WTC11 (cell line): ENCODE measurements at regions of chr1 and their contacts with region 1.

Region 1: DNA sequence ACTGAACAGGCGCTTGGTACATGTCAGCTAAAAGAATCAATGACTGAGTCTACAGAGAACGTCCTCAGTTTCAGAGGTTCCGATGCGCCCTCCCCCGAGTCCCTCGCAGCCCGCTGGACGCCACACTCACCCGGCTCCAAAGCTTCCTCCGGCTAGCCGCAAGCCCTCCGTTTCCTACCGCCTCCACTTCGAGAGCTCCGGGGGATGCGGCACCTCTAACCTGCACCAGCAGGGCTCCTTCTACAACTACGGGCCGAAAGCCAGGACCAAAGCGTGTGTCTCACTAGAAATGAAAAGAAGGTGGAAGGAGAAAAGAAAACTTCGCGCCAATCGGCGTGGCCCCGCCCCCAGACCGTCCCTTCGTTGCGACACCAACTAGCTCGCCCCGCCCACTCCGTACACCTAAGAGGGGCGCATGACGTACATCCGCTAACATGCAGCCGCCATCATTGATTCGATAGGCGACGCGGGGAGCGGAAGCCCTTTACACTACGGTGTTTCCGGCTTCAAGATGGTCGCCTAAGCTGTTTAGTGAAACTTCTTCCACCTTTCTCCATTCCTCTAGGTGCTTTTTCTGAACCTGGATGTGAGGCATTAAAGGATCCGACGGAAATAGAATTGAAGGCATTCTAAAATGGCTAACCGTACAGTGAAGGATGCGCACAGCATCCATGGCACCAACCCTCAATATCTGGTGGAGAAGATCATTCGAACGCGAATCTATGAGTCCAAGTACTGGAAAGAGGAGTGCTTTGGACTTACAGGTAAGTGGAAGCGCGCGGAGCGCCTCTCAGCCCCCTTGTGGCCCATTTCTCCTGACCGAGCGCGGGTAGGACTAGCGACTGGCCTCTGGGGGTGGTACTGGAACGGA is at the starts of genes ORC1 and PRPF38A:
- DNase-seq: peak; percentile 98
- ATAC-seq: peak; percentile 92
- H3K4me3 Mint-ChIP-seq: peak within 1 kb of the TSS; percentile 100
- H3K27ac Mint-ChIP-seq: peak within 1 kb of the TSS; percentile 100
- H3K4me1 Mint-ChIP-seq: peaks cover 23% of the 10 kb centered on the region
- H3K27me3 Mint-ChIP-seq: no peaks in the 10 kb centered on the region
- CTCF ChIP-seq: no peak
- total RNA-seq, gene ORC1: 33.6 to 45.2 TPM (median 34.0 TPM) in 3 replicates
- total RNA-seq, gene PRPF38A: 59.6 to 62.4 TPM (median 59.7 TPM) in 3 replicates

Region 2: GRCh38 chr1:52056163-52056936 is 348.0 kb before region 1 on chr1 and contains the start of gene BTF3L4:
- CTCF ChIA-PET with region 1: no interaction called
- POLR2A ChIA-PET with region 1: interaction called, 10 read pairs
- DNase-seq: peak; percentile 98
- ATAC-seq: peak; percentile 90
- H3K4me3 Mint-ChIP-seq: peak within 1 kb of the TSS; percentile 97
- H3K27ac Mint-ChIP-seq: peak within 1 kb of the TSS; percentile 99
- H3K4me1 Mint-ChIP-seq: peaks cover 33% of the 10 kb centered on the region
- H3K27me3 Mint-ChIP-seq: no peaks in the 10 kb centered on the region
- CTCF ChIP-seq: no peak
- total RNA-seq, gene BTF3L4: 74.7 to 89.4 TPM (median 79.0 TPM) in 3 replicates

Region 3: GRCh38 chr1:52365746-52366516 is 38.4 kb before region 1 on chr1 and contains the start of gene CC2D1B:
- CTCF ChIA-PET with region 1: interaction called, 3 read pairs
- POLR2A ChIA-PET with region 1: interaction called, 10 read pairs
- DNase-seq: peak; percentile 99
- ATAC-seq: peak; percentile 96
- H3K4me3 Mint-ChIP-seq: peak within 1 kb of the TSS; percentile 91
- H3K27ac Mint-ChIP-seq: peak within 1 kb of the TSS; percentile 91
- H3K4me1 Mint-ChIP-seq: peaks cover 25% of the 10 kb centered on the region
- H3K27me3 Mint-ChIP-seq: no peaks in the 10 kb centered on the region; the same call in 1 of the 2 replicates
- CTCF ChIP-seq: no peak
- total RNA-seq, gene CC2D1B: 12.8 to 22.6 TPM (median 14.9 TPM) in 3 replicates

Region 4: GRCh38 chr1:52552505-52553361 is 148.4 kb after region 1 on chr1 and contains the start of gene TUT4:
- CTCF ChIA-PET with region 1: interaction called, 4 read pairs
- POLR2A ChIA-PET with region 1: interaction called, 16 read pairs
- DNase-seq: peak; percentile 89
- ATAC-seq: peak; percentile 82
- H3K4me3 Mint-ChIP-seq: peak within 1 kb of the TSS; percentile 86
- H3K27ac Mint-ChIP-seq: peak within 1 kb of the TSS; percentile 81
- H3K4me1 Mint-ChIP-seq: peaks cover 36% of the 10 kb centered on the region
- H3K27me3 Mint-ChIP-seq: no peaks in the 10 kb centered on the region
- CTCF ChIP-seq: no peak
- total RNA-seq, gene TUT4: 57.4 to 63.6 TPM (median 63.3 TPM) in 3 replicates

Region 5: DNA sequence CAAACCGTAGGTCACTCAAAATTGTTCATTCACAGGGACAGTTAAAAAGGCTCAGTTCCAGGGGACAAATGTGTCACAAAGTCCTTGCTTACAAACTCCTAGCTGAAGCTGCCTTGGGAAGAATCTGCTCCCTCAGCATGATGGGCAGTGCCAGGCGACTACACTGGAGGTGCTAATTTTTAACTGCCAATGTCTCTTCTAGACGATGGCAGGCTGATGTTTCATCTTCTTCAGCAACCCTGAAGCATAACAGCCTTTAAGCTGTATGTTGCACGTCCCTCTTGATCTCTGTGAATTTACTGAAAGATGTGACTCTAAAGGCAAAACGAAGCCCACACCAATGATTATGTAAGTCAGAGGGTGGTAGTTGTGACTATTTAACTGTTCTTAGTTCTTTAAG is 282.5 kb after region 1 on chr1:
- CTCF ChIA-PET with region 1: interaction called, 13 read pairs
- POLR2A ChIA-PET with region 1: no interaction called
- DNase-seq: no peak
- ATAC-seq: no peak
- H3K4me3 Mint-ChIP-seq: no peak overlapping the region
- H3K27ac Mint-ChIP-seq: no peak overlapping the region
- H3K4me1 Mint-ChIP-seq: peaks cover 6% of the 10 kb centered on the region
- H3K27me3 Mint-ChIP-seq: no peaks in the 10 kb centered on the region
- CTCF ChIP-seq: no peak

Region 6: GRCh38 chr1:52695627-52696026 is 291.3 kb after region 1 on chr1:
- CTCF ChIA-PET with region 1: no interaction called
- POLR2A ChIA-PET with region 1: interaction called, 11 read pairs
- DNase-seq: no peak
- ATAC-seq: no peak
- H3K4me3 Mint-ChIP-seq: no peak overlapping the region
- H3K27ac Mint-ChIP-seq: 0 out of 2 replicates have a peak overlapping the region, but pooled peaks have one; percentile 6
- H3K4me1 Mint-ChIP-seq: peaks cover 22% of the 10 kb centered on the region
- H3K27me3 Mint-ChIP-seq: peaks cover 4% of the 10 kb centered on the region; the same call in 1 of the 2 replicates
- CTCF ChIP-seq: no peak